Activated CD4-positive, alpha-beta T cell treated with anti-CD3 and anti-CD28 coated beads for 36 hours (primary cell): ENCODE measurements at regions of chr7 and their contacts with region 1.

Region 1: GRCh38 chr7:46396481-46396880 is 475.4 kb upstream of the IGFBP3 start:
- DNase-seq: no peak
- ATAC-seq: no peak
- H3K4me3 Mint-ChIP-seq: no peak overlapping the region
- H3K27ac Mint-ChIP-seq: no peak overlapping the region
- H3K4me1 Mint-ChIP-seq: no peaks in the 10 kb centered on the region
- H3K27me3 Mint-ChIP-seq: no peaks in the 10 kb centered on the region

Region 2: DNA sequence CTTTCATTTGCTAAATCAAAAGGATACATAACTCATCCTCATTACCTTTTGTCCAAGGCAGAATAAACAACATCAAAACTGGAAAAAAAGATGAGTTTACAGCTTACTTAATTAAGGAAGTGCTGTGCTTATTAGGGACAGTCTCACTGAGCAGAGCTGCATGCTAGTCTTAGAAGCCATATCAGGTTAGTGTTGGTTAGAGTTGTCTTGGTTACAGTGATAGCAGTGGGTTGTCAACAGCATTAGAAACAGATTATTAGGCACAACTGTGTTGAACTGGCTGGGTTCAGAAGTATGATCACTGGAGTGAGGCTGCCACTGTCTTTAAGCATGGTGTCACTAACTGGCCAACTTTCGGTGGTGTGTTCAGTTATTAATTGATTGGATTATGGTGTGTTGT is 28.5 kb after region 1 on chr7:
- CTCF ChIA-PET with region 1: no interaction called
- POLR2A ChIA-PET with region 1: no interaction called
- intact Hi-C with region 1: loop called in 1 of 2 experiments (anchors 1 kb)
- DNase-seq: no peak
- ATAC-seq: no peak
- H3K4me3 Mint-ChIP-seq: no peak overlapping the region
- H3K27ac Mint-ChIP-seq: no peak overlapping the region
- H3K4me1 Mint-ChIP-seq: no peaks in the 10 kb centered on the region
- H3K27me3 Mint-ChIP-seq: peaks cover 4% of the 10 kb centered on the region